ENCODE measurements at regions of chr2 and their contacts with region 1.

Region 1: DNA sequence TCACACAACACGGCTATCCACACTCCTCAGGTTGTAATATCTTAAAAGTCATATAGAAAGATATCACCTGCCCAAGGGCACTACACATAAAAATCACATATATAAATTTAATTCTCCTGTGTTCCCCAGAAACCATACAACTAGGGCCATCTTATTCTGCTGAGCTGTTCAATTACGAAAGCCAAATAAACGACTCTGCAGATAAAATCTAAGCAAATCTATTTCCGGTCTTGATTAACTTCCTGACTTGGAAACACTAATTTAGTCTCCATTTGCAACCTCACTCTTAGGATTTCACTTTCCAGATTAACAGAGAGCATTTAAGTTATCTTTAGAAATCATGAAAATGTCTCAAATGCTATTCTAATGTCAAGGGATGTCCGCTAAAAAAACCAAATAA is 23.9 kb upstream of the STK17B start:
- DNase-seq: no peak
- H3K4me3 Mint-ChIP-seq: no peak overlapping the region
- H3K27ac Mint-ChIP-seq: no peak overlapping the region
- H3K4me1 Mint-ChIP-seq: peaks cover 28% of the 10 kb centered on the region
- H3K27me3 Mint-ChIP-seq: no peaks in the 10 kb centered on the region

Region 2: GRCh38 chr2:196182439-196183171 is 12.7 kb before region 1 on chr2:
- intact Hi-C with region 1: loop called (anchors 1 kb)
- DNase-seq: no peak
- H3K4me3 Mint-ChIP-seq: peak overlapping the region; percentile 84
- H3K27ac Mint-ChIP-seq: peak overlapping the region; percentile 98
- H3K4me1 Mint-ChIP-seq: peaks cover 57% of the 10 kb centered on the region
- H3K27me3 Mint-ChIP-seq: no peaks in the 10 kb centered on the region